ENCODE measurements at regions of chr15 and their contacts with region 1.

Region 1: DNA sequence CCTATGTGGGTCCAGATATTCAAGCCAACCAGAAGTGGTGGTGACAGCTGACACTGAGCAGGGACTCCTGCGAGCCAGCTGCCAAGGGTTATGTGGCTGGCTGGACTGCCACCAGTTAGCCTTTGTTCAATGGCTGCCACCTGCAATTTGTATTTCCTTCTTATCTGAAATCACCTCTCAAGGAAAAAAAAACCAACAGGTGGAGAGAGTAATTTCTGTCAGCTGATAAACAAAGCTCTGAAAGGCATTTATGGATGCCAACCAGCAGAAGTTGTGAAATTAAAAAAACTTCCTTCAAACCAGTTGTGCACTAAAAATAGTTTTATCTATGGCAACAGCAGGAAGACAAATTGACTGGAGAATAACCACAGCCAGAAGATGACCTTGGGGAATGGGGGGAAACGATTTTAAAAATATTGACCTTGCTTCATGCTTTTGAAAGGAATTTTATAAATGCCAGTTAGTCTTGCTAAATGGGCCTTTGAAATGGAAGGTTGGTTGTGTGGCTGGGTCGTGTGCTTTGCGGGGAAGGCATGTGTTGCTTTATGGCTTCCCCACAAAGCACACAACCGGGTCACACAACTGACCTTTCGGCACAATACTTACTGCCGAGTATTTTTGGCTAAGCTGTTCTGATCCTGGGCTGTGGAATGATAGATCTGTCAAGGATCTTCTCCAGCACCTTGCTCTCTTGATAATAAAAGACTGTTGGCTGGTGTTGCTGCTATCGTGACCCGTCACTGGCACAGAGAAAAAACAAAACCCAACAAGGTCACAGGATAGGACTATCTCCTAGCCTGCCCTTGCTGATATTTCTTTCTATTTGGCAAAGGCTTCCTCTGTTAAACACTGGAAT is 3.5 kb downstream of the MYZAP start:
- DNase-seq: peak; percentile 78
- ATAC-seq: peak; percentile 62

Region 2: DNA sequence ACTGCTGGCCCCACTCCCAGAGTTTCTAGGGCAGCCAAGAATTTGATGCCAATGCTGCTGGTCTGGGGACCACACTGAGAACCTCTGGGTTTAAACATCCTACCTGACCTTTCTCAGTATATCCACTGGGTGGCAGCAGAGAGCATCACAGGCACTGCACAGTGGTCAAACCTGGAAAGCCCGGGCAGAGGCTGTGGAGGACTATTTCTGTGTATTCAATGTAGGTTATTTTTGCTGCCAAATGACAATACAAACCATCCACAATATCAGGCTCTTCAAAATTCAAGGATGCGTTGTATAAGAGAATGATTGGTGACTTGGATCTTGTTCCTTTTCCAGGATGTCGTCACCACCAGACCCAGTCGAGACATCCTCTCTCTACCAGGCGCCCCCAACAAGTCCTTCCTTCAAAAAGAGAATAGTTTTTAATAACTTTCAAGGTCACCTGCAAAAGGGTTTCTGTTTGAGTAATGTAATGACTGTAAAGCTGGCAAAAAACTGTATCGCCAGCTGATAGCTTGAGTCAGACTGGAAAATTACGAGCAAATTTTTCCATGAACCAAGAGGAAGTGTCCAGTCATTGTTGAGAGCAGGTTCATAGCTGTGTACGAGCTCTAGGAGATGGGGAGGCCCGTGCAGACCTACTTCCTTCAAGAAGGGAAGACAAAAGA is 34.1 kb before region 1 on chr15:
- intact Hi-C with region 1: loop called (anchors 5 kb)
- DNase-seq: peak; percentile 76
- ATAC-seq: peak; percentile 91